ENCODE measurements at regions of chr9 and their contacts with region 1.

Region 1: GRCh38 chr9:107299437-107299836 is 16.4 kb downstream of the RAD23B start:
- DNase-seq: no peak
- ATAC-seq: peak; percentile 5
- H3K4me3 Mint-ChIP-seq: no peak overlapping the region
- H3K27ac Mint-ChIP-seq: no peak overlapping the region
- H3K4me1 Mint-ChIP-seq: peaks cover 38% of the 10 kb centered on the region
- H3K27me3 Mint-ChIP-seq: no peaks in the 10 kb centered on the region
- CTCF ChIP-seq: no peak

Region 2: GRCh38 chr9:107260437-107261086 is 38.9 kb before region 1 on chr9:
- CTCF ChIA-PET with region 1: no interaction called
- POLR2A ChIA-PET with region 1: interaction called, 3 read pairs
- intact Hi-C with region 1: loop called (anchors 1 kb)
- DNase-seq: peak; percentile 17
- ATAC-seq: peak; percentile 98
- H3K4me3 Mint-ChIP-seq: peak overlapping the region; percentile 53
- H3K27ac Mint-ChIP-seq: peak overlapping the region; percentile 67
- H3K4me1 Mint-ChIP-seq: peaks cover 26% of the 10 kb centered on the region
- H3K27me3 Mint-ChIP-seq: peaks cover 3% of the 10 kb centered on the region
- CTCF ChIP-seq: no peak

Region 3: DNA sequence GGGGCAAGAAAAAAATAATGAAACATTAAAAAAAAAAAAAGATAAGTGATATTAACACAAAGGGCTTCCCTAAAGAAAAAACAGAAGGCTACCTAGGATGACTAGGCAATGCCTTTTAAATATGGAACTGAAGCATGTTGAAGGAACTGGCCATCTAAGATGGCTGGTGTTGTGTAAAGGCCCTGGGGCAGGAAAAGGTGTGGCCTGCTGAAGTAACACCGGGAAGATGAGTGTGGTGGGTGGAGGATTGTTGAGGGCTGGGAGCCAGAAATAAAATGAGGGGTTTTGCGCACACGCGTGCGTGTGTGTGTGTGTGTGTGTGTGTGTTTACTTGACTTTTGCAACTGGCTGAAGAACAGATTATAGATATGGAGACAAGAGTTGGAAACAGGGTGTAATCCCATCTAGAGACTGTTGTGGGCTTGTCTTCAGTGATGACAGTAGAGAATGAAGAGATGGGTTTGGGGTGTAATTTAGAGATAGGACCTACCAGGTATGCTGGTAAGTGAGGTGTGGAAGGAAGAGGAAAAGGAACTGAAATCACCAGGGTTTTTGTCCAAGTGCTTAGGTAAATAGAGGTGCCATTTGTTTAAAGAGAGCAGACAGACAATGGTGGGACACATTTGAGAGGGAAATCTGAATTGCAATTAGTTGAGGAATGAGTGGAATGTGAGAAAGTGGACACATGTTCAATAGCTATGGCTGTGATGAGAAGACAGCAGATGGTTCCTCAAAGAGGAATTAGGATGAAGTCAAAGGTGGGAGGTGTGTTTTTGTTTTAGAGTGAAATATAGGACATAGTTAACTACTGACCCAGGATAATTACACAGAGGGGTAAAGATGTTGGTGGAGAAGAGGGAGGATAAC is 17.6 kb after region 1 on chr9:
- CTCF ChIA-PET with region 1: no interaction called
- POLR2A ChIA-PET with region 1: no interaction called
- intact Hi-C with region 1: loop called (anchors 2 kb)
- DNase-seq: no peak
- ATAC-seq: peak; percentile 34
- H3K4me3 Mint-ChIP-seq: no peak overlapping the region
- H3K27ac Mint-ChIP-seq: peak overlapping the region; percentile 5
- H3K4me1 Mint-ChIP-seq: peaks cover 52% of the 10 kb centered on the region
- H3K27me3 Mint-ChIP-seq: no peaks in the 10 kb centered on the region
- CTCF ChIP-seq: no peak

Region 4: DNA sequence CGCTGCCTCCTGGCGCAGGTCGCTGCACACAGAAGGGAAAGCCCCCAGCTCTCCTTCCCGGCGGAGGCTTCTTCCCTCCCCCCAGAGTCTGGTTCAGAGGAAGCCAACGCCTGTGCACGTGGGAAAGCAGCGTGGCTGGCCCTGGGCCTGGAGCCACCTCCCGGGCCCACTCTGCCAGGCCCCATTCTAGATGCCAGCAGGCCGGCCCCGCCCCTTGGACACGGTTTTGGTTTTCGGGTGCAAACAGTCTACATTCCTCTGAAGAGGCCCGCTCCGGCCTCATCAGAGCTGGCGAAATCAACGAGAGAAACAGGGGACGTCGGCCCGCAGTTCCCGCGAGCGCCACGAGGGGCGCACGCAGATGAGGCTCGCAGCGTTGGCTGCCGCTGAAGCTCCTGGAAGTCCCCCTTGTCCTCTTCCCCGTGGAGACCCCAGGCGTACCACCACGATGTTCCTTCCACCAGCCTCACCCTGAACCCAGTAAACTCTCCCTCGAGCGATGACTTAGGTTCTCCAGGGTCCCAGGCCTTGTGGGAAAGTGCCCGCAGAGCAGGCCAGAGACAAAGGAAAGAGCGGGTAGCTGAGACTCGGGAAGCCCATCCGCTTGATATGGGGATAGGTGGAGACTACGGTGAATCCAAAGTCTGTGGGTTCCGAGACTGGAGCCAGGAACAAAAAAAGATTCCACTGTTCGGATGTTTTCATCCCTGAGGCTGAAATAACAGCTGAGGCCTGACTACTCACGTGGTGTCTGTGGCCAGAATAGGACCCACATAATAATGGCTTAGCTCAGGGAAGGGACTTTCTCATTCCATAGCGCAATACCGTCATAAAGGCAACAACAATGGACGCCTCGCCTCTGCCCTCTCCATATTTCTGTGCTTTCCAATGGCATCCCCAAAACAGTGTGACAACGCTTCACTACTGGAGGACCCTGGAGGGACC is 125.9 kb after region 1 on chr9:
- CTCF ChIA-PET with region 1: no interaction called
- POLR2A ChIA-PET with region 1: no interaction called
- intact Hi-C with region 1: no loop called
- DNase-seq: peak; percentile 46
- ATAC-seq: peak; percentile 78
- H3K4me3 Mint-ChIP-seq: peak overlapping the region; percentile 48
- H3K27ac Mint-ChIP-seq: no peak overlapping the region
- H3K4me1 Mint-ChIP-seq: peaks cover 3% of the 10 kb centered on the region
- H3K27me3 Mint-ChIP-seq: peaks cover 15% of the 10 kb centered on the region
- CTCF ChIP-seq: peak; percentile 59

Measured in activated B cell treated with CpG ODN at 0.5 μM for 24 hours (primary cell).